ENCODE measurements at regions of chr13 and their contacts with region 1.

Region 1: GRCh38 chr13:45047394-45048310 is 58.3 kb downstream of the GPALPP1 start:
- DNase-seq: peak; percentile 86
- ATAC-seq: peak; percentile 93
- H3K4me3 Mint-ChIP-seq: peak overlapping the region; percentile 73
- H3K27ac Mint-ChIP-seq: no peak overlapping the region
- H3K4me1 Mint-ChIP-seq: peaks cover 15% of the 10 kb centered on the region
- H3K27me3 Mint-ChIP-seq: peaks cover 23% of the 10 kb centered on the region

Region 2: GRCh38 chr13:45036206-45036605 is 11.4 kb before region 1 on chr13:
- CTCF ChIA-PET with region 1: interaction called, 10 read pairs
- POLR2A ChIA-PET with region 1: no interaction called
- DNase-seq: no peak
- ATAC-seq: no peak
- H3K4me3 Mint-ChIP-seq: no peak overlapping the region
- H3K27ac Mint-ChIP-seq: no peak overlapping the region
- H3K4me1 Mint-ChIP-seq: no peaks in the 10 kb centered on the region
- H3K27me3 Mint-ChIP-seq: no peaks in the 10 kb centered on the region

Region 3: DNA sequence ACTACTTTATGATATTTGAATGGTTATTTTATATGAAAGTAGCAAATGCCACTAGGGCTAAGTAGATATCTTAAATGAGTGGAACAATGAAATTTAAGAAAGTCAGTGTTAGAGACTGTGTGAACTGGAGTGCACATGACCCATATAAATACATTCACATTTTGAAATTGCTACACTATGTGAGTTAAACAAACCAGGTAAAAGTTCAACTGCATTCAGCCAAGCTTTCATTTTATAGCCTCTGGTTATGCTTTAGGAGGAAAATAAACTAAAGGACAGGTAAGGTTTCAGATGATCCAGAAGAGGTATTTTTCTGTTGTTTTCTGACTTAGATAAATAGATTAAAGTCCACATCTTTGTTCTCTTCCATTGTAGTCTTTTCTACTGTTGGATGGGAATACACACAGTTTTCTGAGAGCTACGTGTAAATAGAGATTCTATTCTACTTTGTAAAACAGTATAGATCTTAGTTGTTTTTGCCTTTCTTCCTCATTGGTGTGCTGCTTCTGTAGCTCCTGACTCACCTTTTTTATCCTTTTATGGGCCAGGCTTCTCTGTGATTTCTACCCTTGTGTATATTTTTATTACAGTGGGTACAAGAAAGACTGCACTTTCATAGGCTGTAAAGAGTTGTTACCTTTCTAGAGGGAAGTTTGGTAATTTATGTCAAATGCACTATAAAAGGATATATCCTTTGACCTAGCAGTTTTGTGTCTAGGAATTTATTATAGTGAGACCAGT is 207.8 kb after region 1 on chr13:
- CTCF ChIA-PET with region 1: no interaction called
- POLR2A ChIA-PET with region 1: no interaction called
- DNase-seq: no peak
- ATAC-seq: no peak
- H3K4me3 Mint-ChIP-seq: no peak overlapping the region
- H3K27ac Mint-ChIP-seq: no peak overlapping the region
- H3K4me1 Mint-ChIP-seq: peaks cover 14% of the 10 kb centered on the region
- H3K27me3 Mint-ChIP-seq: no peaks in the 10 kb centered on the region

Region 4: DNA sequence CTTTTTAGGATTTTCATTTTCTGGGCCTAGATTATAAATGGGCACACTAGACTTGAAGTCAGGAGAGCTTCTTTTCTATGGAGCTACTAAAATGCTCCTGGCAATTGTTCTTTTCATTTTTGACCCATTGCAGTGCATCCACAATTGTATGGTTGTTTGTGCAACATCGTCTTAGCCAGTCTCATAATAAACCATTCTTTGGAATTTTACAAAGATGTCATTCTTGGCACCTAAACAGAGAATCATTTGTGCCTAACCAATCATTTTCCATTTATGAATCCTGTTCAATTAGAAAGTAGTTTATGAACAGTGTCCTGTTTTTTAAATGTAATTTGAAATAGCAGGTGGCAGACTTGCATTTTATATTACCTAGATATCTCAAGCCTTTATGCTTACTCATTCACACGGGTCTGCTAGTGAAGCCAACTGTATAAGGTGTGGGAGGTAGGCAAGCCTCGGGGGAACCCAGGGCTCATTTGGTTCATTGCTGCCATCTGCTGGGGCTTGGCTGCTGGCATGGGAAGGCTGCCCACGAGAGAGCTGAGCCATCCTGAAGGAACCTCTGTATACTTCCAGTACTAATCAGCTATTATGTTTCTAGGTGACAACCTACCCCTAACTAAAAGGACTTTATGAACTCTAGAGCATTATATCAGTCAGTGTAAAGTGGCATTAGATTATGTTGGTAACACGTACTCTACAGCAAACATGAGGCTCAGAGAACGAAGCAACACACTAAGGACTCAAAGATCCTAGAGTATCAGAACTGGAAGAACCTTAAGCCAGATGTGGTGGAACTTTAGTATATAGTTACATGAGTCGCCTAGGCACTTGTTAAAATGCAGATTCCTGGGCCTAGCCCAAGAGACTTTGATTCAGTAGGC is 233.3 kb after region 1 on chr13:
- CTCF ChIA-PET with region 1: interaction called, 44 read pairs
- POLR2A ChIA-PET with region 1: no interaction called
- DNase-seq: peak; percentile 56
- ATAC-seq: peak; percentile 70
- H3K4me3 Mint-ChIP-seq: no peak overlapping the region
- H3K27ac Mint-ChIP-seq: no peak overlapping the region
- H3K4me1 Mint-ChIP-seq: no peaks in the 10 kb centered on the region
- H3K27me3 Mint-ChIP-seq: no peaks in the 10 kb centered on the region

Region 5: GRCh38 chr13:45297456-45298205 is 250.0 kb after region 1 on chr13:
- CTCF ChIA-PET with region 1: interaction called, 20 read pairs
- POLR2A ChIA-PET with region 1: no interaction called
- DNase-seq: peak; percentile 40
- ATAC-seq: peak; percentile 77
- H3K4me3 Mint-ChIP-seq: no peak overlapping the region
- H3K27ac Mint-ChIP-seq: peak overlapping the region; percentile 85
- H3K4me1 Mint-ChIP-seq: peaks cover 27% of the 10 kb centered on the region
- H3K27me3 Mint-ChIP-seq: peaks cover 2% of the 10 kb centered on the region

Region 6: GRCh38 chr13:45310341-45311125 is 262.9 kb after region 1 on chr13:
- CTCF ChIA-PET with region 1: interaction called, 92 read pairs
- POLR2A ChIA-PET with region 1: no interaction called
- DNase-seq: no peak
- ATAC-seq: no peak
- H3K4me3 Mint-ChIP-seq: peak overlapping the region; percentile 78
- H3K27ac Mint-ChIP-seq: peak overlapping the region; percentile 32
- H3K4me1 Mint-ChIP-seq: peaks cover 20% of the 10 kb centered on the region
- H3K27me3 Mint-ChIP-seq: peaks cover 6% of the 10 kb centered on the region

Region 7: GRCh38 chr13:45393941-45394570 is 346.4 kb after region 1 on chr13:
- CTCF ChIA-PET with region 1: interaction called, 16 read pairs
- POLR2A ChIA-PET with region 1: no interaction called
- DNase-seq: peak; percentile 58
- ATAC-seq: no peak
- H3K4me3 Mint-ChIP-seq: no peak overlapping the region
- H3K27ac Mint-ChIP-seq: peak overlapping the region; percentile 24
- H3K4me1 Mint-ChIP-seq: peaks cover 46% of the 10 kb centered on the region
- H3K27me3 Mint-ChIP-seq: no peaks in the 10 kb centered on the region